Esophagus muscularis mucosa (tissue), 4 donors: ENCODE measurements at regions of chr19 and their contacts with region 1.

Region 1: DNA sequence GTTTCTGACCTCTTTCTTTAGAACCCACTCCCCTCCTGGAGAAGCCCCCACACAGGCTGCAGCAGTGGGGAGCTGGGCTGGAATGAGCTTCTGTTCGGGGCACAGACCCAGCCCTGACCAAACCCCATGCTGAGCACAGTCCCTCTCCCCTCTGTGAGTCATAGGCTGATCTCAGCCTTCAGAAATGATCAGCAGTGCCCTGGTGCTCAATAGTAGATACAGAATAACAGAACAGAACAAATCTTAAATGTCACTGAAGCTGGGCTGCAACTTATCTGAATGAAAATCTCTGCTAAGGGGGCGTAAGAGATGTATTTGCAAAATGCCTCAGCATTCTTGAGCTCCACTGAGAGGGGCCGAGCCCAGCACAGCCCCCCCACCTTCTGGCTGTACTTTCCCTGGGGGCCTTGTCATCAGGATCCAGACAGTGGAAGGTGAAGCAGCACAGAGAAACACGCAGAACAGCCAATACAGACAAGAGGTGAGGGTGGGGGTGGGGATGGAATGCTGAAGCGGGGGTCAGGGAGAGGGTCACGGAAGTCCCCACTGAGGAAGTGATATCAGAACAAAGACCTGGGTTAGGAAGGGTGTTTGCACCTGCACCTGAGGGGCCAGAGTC is 9.9 kb downstream of the ZNF665 start:
- DNase-seq: no peak
- H3K4me3 ChIP-seq: no peak overlapping the region
- H3K27ac ChIP-seq: peak overlapping the region in 1 of 4 donors; percentile 23
- H3K4me1 ChIP-seq: no peaks in the 10 kb centered on the region
- H3K27me3 ChIP-seq: no peaks in the 10 kb centered on the region
- CTCF ChIP-seq: no peak
- EP300 ChIP-seq: no peak
- POLR2A ChIP-seq: no peak

Region 2: GRCh38 chr19:53076977-53077376 is 106.3 kb before region 1 on chr19:
- intact Hi-C with region 1: loop called (anchors 5 kb)
- DNase-seq: no peak
- H3K4me3 ChIP-seq: no peak overlapping the region
- H3K27ac ChIP-seq: no peak overlapping the region
- H3K4me1 ChIP-seq: peaks cover 7 to 13% (median 11%) of the 10 kb centered on the region in 4 donors
- H3K27me3 ChIP-seq: no peaks in the 10 kb centered on the region
- CTCF ChIP-seq: peak; percentile 66 to 81 (median 66)
- EP300 ChIP-seq: no peak
- POLR2A ChIP-seq: no peak

Region 3: GRCh38 chr19:53532362-53532761 is 349.1 kb after region 1 on chr19:
- intact Hi-C with region 1: no loop called
- DNase-seq: no peak
- H3K4me3 ChIP-seq: no peak overlapping the region
- H3K27ac ChIP-seq: no peak overlapping the region
- H3K4me1 ChIP-seq: peaks cover 0 to 4% (median 1%) of the 10 kb centered on the region in 4 donors
- H3K27me3 ChIP-seq: no peaks in the 10 kb centered on the region
- CTCF ChIP-seq: no peak
- EP300 ChIP-seq: no peak
- POLR2A ChIP-seq: no peak